Activated CD4-positive, alpha-beta memory T cell treated with anti-CD3 and anti-CD28 coated beads, Interleukin-2, amount 10 ng/mL, durations not matched to agents 7 days and 5 days (primary cell): ENCODE measurements at regions of chr2 and their contacts with region 1.

Region 1: DNA sequence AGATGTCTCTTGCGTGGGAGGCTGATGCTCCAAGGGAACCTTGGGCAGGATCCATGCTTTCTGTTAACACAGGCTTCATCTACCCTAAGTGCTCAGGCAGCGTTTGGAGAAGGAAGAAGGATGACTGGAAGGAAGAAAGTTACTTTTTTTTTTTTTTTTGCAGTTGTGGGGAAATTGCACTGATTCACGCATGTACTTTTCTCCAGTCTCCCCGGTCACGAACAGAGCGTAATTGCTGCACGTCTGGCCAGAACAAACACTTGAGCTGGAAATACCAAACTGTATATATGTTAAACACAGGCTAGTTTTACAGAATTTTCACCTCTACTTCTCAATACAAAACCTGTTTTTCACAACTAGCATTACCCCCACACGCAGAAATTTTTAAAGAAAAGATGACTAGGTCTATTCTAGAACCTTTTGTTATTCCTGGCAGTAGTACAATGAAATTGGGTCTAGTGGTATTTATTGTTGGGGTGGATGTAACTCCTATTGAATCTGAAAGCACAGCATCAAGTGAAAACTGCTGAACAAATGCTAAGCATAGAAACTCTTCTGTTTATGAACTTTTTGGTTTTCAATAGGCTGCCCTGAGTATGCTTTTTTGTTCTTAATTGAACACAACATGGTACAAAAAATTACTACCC is 9.3 kb upstream of the SCYGR5 start:
- DNase-seq: no peak
- H3K4me3 Mint-ChIP-seq: no peak overlapping the region
- H3K27ac Mint-ChIP-seq: no peak overlapping the region
- H3K4me1 Mint-ChIP-seq: no peaks in the 10 kb centered on the region
- H3K27me3 Mint-ChIP-seq: peaks cover 6% of the 10 kb centered on the region

Region 2: GRCh38 chr2:226984750-226985582 is 672.4 kb before region 1 on chr2:
- CTCF ChIA-PET with region 1: no interaction called
- POLR2A ChIA-PET with region 1: no interaction called
- DNase-seq: peak; percentile 24
- H3K4me3 Mint-ChIP-seq: no peak overlapping the region
- H3K27ac Mint-ChIP-seq: no peak overlapping the region
- H3K4me1 Mint-ChIP-seq: peaks cover 21% of the 10 kb centered on the region
- H3K27me3 Mint-ChIP-seq: no peaks in the 10 kb centered on the region

Region 3: DNA sequence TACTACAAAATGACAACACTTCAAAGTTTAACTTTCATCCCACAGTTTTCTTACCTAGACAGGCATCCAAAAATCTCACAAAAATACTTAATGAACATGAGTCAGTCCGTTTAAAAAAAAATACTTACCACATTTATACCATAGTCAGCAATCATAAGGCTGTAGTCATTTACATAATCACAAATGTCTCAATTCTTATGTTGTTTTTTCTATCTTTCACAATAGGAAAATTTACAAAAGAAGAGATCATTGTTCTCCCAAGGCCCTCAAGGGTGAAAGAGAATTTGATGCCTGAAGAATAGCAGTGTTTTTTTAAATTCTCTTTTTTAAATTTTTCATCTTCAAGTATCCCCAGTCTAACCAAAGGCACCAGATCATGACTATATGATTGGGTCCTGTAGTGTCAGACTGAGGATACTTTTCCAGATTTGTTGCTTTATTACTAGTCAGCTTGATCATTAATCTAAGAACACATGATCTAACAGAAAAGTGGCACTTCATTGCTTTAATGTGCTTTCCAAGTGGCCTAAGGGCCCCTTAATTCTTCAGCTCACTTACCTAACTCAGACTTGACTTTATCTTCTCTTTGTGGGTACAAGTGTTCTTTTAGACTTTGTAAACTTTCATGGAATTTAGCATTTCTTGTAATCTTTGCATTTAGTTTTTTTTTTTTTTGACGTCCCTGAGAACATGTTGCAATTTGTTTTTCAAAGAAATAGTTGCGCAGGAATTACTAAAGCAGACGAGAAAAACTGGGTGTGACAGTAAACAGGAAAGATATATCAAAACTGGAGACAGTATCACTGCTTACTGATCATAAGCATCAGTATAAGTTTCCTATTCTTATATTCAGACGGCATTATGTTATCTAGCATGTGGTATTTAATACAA is 14.1 kb after region 1 on chr2:
- CTCF ChIA-PET with region 1: interaction called, 10 read pairs
- POLR2A ChIA-PET with region 1: no interaction called
- DNase-seq: no peak
- H3K4me3 Mint-ChIP-seq: no peak overlapping the region
- H3K27ac Mint-ChIP-seq: no peak overlapping the region
- H3K4me1 Mint-ChIP-seq: no peaks in the 10 kb centered on the region
- H3K27me3 Mint-ChIP-seq: peaks cover 3% of the 10 kb centered on the region

Region 4: GRCh38 chr2:227834423-227834822 is 177.1 kb after region 1 on chr2:
- CTCF ChIA-PET with region 1: no interaction called
- POLR2A ChIA-PET with region 1: no interaction called
- DNase-seq: no peak
- H3K4me3 Mint-ChIP-seq: no peak overlapping the region
- H3K27ac Mint-ChIP-seq: no peak overlapping the region
- H3K4me1 Mint-ChIP-seq: no peaks in the 10 kb centered on the region
- H3K27me3 Mint-ChIP-seq: peaks cover 7% of the 10 kb centered on the region

Region 5: GRCh38 chr2:227862227-227862740 is 205.0 kb after region 1 on chr2:
- CTCF ChIA-PET with region 1: interaction called, 39 read pairs
- POLR2A ChIA-PET with region 1: no interaction called
- DNase-seq: peak; percentile 25
- H3K4me3 Mint-ChIP-seq: no peak overlapping the region
- H3K27ac Mint-ChIP-seq: no peak overlapping the region
- H3K4me1 Mint-ChIP-seq: no peaks in the 10 kb centered on the region
- H3K27me3 Mint-ChIP-seq: no peaks in the 10 kb centered on the region